ENCODE measurements at regions of chr17 and their contacts with region 1.

Region 1: DNA sequence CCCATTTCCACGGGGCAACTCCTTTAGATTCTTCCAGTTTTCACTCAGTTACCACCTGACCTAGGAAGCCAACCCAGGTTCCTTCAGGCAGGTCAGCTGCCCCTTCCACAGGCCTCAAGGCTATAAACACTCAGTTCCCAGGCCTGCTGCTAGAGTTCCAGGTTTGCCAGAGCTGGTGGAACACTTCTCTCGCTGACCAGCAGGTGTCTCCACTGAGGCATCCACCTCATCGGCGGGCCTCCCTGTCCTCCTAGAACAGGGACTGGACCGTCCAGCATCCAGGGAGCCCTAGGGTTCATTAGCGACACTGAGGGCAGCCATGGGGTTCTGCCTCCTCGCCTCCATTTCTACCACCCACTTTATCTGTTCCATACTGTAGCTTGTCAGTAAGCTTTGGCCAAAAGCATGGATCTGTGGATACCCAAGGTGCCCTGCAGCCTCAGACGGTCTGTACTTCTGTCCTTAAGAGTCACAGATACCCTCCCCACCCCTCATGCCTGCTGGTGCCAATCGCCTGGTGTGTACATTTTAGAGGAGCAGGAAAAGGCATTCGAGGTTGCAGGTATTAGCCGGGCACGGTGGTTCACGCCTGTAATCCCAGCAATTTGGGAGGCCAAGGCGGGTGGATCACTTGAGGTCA is 29.0 kb downstream of the PIMREG start:
- DNase-seq: peak; percentile 78
- H3K4me3 Mint-ChIP-seq: no peak overlapping the region
- H3K27ac Mint-ChIP-seq: peak overlapping the region; percentile 38
- H3K4me1 Mint-ChIP-seq: peaks cover 2% of the 10 kb centered on the region
- H3K27me3 Mint-ChIP-seq: no peaks in the 10 kb centered on the region

Region 2: DNA sequence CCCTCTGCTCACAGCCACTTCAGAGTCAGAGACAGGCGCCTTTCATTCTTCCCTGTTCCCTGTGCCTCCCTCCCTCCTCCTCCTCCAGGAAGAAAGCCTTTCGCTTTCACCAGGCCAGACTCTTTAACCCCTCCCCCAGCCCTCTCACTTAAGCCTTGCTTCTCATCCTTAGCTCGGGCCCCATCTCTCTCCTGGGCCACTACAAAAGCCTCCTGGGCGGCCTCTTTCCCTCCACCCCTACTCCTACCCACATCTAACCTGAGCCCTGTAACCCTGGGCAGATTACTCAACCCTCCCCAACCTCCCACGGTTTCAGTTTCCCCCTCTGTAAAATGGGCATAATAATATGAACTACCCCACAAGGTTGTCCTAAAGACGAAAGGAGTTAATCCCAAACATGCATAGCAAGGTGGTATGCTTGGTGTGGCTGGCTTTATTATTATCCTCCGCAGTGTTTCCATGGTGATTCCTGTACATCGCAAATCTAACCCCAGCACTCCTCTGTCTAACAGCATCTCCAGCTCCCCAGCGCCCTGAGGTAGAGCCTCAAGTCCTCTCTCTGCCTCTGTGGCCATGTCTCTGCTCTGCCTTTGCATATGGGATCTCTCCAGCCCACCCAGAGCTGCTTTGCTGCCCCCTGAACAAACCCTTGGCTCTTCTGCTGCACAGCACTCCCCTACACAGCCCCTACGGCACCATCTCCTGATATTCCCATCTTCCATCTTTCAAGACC is 11.3 kb before region 1 on chr17:
- CTCF ChIA-PET with region 1: interaction called, 14 read pairs
- POLR2A ChIA-PET with region 1: no interaction called
- intact Hi-C with region 1: no loop called
- DNase-seq: peak; percentile 49
- H3K4me3 Mint-ChIP-seq: no peak overlapping the region
- H3K27ac Mint-ChIP-seq: no peak overlapping the region
- H3K4me1 Mint-ChIP-seq: peaks cover 19% of the 10 kb centered on the region
- H3K27me3 Mint-ChIP-seq: peaks cover 2% of the 10 kb centered on the region

Region 3: GRCh38 chr17:6555331-6556120 is 82.3 kb after region 1 on chr17:
- CTCF ChIA-PET with region 1: no interaction called
- POLR2A ChIA-PET with region 1: no interaction called
- intact Hi-C with region 1: no loop called
- DNase-seq: peak; percentile 20
- H3K4me3 Mint-ChIP-seq: peak overlapping the region; percentile 59
- H3K27ac Mint-ChIP-seq: no peak overlapping the region
- H3K4me1 Mint-ChIP-seq: peaks cover 8% of the 10 kb centered on the region
- H3K27me3 Mint-ChIP-seq: peaks cover 43% of the 10 kb centered on the region

Region 4: DNA sequence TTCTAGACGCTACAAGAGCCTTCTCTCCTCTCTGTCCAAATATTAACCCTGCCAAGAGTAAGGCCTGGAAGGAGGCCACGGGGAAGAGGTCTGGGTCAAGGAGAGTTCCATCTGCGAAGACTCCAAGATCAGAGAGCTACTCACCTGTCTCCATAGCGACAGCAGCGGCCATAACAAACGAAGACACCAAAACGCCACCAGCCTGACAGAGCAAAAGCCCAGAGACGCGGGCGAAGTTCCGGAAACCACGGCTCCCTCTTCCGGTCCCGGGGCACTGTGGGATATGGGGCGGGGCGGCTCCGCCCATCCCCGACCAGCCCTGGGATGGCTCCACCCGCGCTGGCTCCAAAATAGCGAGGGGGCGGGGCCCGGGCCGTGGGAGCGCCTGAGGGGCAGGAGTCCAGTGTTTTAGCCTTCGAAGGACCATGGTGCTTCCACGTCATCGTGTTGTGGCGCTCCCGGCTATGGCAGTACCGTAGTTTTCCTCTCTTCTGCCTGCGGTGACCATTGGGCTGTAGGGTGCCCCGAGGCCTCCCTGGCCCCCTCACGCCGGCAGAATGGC is 178.2 kb after region 1 on chr17 and contains the starts of genes C17orf100 and MED31:
- CTCF ChIA-PET with region 1: interaction called, 5 read pairs
- POLR2A ChIA-PET with region 1: no interaction called
- intact Hi-C with region 1: loop called (anchors 5 kb)
- DNase-seq: peak; percentile 97
- H3K4me3 Mint-ChIP-seq: peak within 1 kb of the TSS; percentile 99
- H3K27ac Mint-ChIP-seq: peak within 1 kb of the TSS; percentile 97
- H3K4me1 Mint-ChIP-seq: peaks cover 60% of the 10 kb centered on the region
- H3K27me3 Mint-ChIP-seq: no peaks in the 10 kb centered on the region
- total RNA-seq, gene C17orf100: 1.5 to 1.8 TPM
- total RNA-seq, gene MED31: 22.6 to 25.9 TPM